H1 (cell line): ENCODE measurements at regions of chr9 and their contacts with region 1.

Region 1: GRCh38 chr9:127854184-127854806 is at the start of gene ENG:
- DNase-seq: no peak
- H3K4me3 ChIP-seq: no peak within 1 kb of the TSS
- H3K27ac ChIP-seq: no peak within 1 kb of the TSS
- H3K4me1 ChIP-seq: peaks cover 0 to 10% (median 6%) of the 10 kb centered on the region in 4 experiments; a peak in 5 of 7 replicates
- H3K27me3 ChIP-seq: no peaks in the 10 kb centered on the region
- CTCF ChIP-seq: no peak
- EP300 ChIP-seq: no peak
- POLR2A ChIP-seq: no peak
- RAD21 ChIP-seq: no peak
- total RNA-seq, gene ENG: 4.2 and 4.4 TPM in 2 replicates

Region 2: GRCh38 chr9:127686461-127687393 is 167.6 kb before region 1 on chr9:
- CTCF ChIA-PET with region 1: no interaction called
- POLR2A ChIA-PET with region 1: no interaction called
- DNase-seq: no peak
- H3K4me3 ChIP-seq: no peak overlapping the region
- H3K27ac ChIP-seq: no peak overlapping the region
- H3K4me1 ChIP-seq: no peaks in the 10 kb centered on the region
- H3K27me3 ChIP-seq: no peaks in the 10 kb centered on the region
- CTCF ChIP-seq: no peak
- EP300 ChIP-seq: no peak
- POLR2A ChIP-seq: no peak
- RAD21 ChIP-seq: no peak

Region 3: DNA sequence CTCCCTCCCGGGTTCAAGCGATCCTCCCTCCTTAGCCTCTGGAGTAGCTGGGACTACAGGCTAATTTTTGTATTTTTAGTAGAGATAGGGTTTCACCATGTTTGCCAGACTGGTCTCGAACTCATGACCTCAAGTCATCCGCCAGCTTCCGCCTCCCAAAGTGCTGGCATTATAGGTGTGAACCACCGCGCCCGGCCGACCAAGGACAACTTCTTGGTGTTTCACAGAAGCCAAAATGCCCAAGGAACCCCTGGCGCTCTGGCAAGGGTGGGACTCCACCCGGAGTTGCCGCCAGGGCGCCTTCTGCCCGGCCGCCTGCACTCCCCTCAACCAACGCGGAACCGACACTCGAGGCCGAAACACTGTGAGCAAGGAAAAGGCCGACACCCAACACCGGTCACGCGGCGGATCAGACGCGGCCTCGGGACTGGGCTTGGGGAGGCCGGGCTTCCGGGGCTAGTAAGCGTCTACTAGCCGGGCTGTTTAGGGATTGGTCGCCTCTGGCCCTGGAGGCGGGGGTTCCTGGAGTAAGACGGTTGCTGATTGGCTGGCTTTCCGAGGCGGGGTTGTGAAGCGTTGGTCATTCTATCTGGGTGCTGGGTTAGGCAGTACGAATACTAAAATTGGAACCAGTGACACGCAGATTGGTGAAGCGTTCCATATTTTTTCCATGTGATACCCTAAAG is 155.2 kb before region 1 on chr9:
- CTCF ChIA-PET with region 1: no interaction called
- POLR2A ChIA-PET with region 1: no interaction called
- DNase-seq: peak; percentile 85 to 94
- H3K4me3 ChIP-seq: peak overlapping the region; percentile 26 to 59 (median 44)
- H3K27ac ChIP-seq: no peak overlapping the region
- H3K4me1 ChIP-seq: no peaks in the 10 kb centered on the region
- H3K27me3 ChIP-seq: no peaks in the 10 kb centered on the region; a peak in 2 of 7 replicates
- CTCF ChIP-seq: no peak
- EP300 ChIP-seq: no peak
- POLR2A ChIP-seq: peak in 1 of 2 experiments; percentile 68; a peak in 2 of 3 replicates
- RAD21 ChIP-seq: no peak

Region 4: GRCh38 chr9:127877566-127877998 is 23.3 kb after region 1 on chr9 and contains the start of gene AK1:
- CTCF ChIA-PET with region 1: interaction called, 43 read pairs
- POLR2A ChIA-PET with region 1: interaction called, 4 read pairs
- DNase-seq: peak in 1 of 2 experiments; percentile 84
- H3K4me3 ChIP-seq: peak within 1 kb of the TSS; percentile 46 to 66 (median 58)
- H3K27ac ChIP-seq: no peak within 1 kb of the TSS
- H3K4me1 ChIP-seq: peaks cover 0 to 10% (median 7%) of the 10 kb centered on the region in 4 experiments; a peak in 6 of 7 replicates
- H3K27me3 ChIP-seq: no peaks in the 10 kb centered on the region
- CTCF ChIP-seq: no peak
- EP300 ChIP-seq: no peak
- POLR2A ChIP-seq: peak in 1 of 2 experiments; percentile 52; a peak in 1 of 3 replicates
- RAD21 ChIP-seq: no peak
- total RNA-seq, gene AK1: 35.9 and 37.9 TPM in 2 replicates

Region 5: DNA sequence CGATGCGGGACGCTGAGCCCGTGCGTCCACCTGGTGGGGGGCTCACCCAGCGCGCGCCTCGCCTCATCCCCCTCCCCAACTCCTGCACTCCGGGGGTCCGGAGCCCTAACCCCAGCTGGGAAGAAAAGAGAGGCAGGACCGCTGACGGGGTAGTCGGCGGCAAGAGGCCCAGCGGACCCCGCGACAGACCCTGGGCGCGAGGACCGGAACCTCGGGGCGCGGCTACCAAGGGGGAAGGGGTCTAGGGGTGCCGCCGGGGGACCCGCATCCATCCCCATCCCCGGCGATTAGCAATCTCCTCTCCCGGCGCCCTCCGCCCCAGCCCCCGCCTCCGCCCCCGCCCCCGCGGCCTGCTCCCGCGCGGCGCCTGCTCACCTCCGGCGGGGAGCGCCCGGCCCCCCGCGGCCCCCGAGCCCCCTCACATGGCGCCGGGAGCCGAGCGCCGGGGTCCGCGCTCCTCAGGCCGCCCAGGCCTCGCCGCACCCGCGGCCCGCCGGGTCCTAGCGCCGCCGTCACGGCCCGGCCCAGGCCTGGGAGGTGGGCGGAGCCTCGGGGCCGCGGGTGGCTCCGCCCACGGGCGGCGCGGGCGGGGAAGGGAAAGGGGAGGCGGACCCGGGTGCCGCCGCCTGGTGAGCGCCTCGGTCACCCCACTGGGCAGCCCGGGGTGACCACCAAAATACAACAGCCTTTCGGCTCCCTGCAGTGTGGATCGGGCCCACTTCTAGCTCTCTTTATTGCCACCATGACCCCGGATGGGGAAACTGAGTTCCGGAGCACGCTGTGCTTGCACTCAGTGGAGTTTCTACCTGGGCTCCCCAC is 45.0 kb after region 1 on chr9 and contains the start of gene ST6GALNAC6:
- CTCF ChIA-PET with region 1: no interaction called
- POLR2A ChIA-PET with region 1: interaction called, 16 read pairs
- DNase-seq: peak in 1 of 2 experiments; percentile 82
- H3K4me3 ChIP-seq: peak within 1 kb of the TSS; percentile 78 to 99 (median 88)
- H3K27ac ChIP-seq: no peak within 1 kb of the TSS
- H3K4me1 ChIP-seq: peaks cover 3 to 40% (median 25%) of the 10 kb centered on the region in 4 experiments
- H3K27me3 ChIP-seq: no peaks in the 10 kb centered on the region
- CTCF ChIP-seq: no peak
- EP300 ChIP-seq: no peak
- POLR2A ChIP-seq: peak in 1 of 2 experiments; percentile 44; a peak in 1 of 3 replicates
- RAD21 ChIP-seq: no peak
- total RNA-seq, gene ST6GALNAC6: 37.7 and 43.7 TPM in 2 replicates

Region 6: DNA sequence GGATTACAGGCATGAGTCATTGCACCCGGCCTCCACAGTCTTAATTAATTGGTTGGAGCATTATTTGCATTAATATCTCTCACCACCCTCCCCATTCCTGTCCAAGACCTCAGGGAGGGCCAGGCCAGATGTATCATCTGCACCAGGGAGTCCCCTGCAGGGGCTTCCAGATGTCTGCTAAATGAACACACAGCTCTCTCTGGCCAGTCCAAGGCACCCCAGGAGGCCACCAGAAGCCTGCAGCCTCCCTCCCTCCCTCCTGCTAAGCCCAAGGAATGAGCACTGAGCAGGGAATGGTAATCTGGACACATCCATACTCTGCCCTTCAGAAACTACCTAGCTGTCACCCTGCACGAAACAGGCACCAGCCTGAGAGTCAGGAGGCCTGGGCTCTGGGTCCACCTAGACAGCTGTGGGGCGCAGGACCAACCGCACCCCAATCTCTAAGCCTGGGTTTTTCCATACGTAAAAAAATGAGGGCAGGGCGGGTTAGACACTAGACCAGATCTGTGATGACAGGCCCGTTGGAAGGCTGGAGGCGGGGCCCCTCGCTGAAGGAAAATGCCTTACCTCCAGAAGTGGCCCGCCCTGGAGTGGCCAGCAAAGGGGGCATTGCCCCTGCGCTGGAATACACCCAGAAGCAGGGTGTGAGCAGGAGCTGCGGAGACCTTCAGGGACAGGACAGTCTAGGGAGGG is 328.7 kb after region 1 on chr9:
- CTCF ChIA-PET with region 1: no interaction called
- POLR2A ChIA-PET with region 1: no interaction called
- DNase-seq: no peak
- H3K4me3 ChIP-seq: no peak overlapping the region
- H3K27ac ChIP-seq: no peak overlapping the region
- H3K4me1 ChIP-seq: no peaks in the 10 kb centered on the region
- H3K27me3 ChIP-seq: no peaks in the 10 kb centered on the region
- CTCF ChIP-seq: no peak
- EP300 ChIP-seq: no peak
- POLR2A ChIP-seq: no peak
- RAD21 ChIP-seq: no peak